HCT116 (cell line): ENCODE measurements at regions of chr16 and their contacts with region 1.

Region 1: GRCh38 chr16:88811769-88812512 is at the start of gene APRT:
- DNase-seq: peak; percentile 91
- ATAC-seq: peak; percentile 64
- H3K4me3 ChIP-seq: peak within 1 kb of the TSS; percentile 72 to 75
- H3K27ac ChIP-seq: peak within 1 kb of the TSS; percentile 100
- H3K4me1 ChIP-seq: peaks cover 22 to 59% of the 10 kb centered on the region in 2 experiments
- H3K27me3 ChIP-seq: no peaks in the 10 kb centered on the region
- CTCF ChIP-seq: peak in 2 of 3 experiments; percentile 35; a peak in 4 of 6 replicates
- POLR2A ChIP-seq: peak; percentile 77
- RAD21 ChIP-seq: no peak
- total RNA-seq, gene APRT: 311 TPM

Region 2: GRCh38 chr16:88102597-88102996 is 709.3 kb before region 1 on chr16:
- CTCF ChIA-PET with region 1: no interaction called
- POLR2A ChIA-PET with region 1: no interaction called
- RAD21 ChIA-PET with region 1: no interaction called
- intact Hi-C with region 1: no loop called
- DNase-seq: no peak
- ATAC-seq: no peak
- H3K4me3 ChIP-seq: no peak overlapping the region
- H3K27ac ChIP-seq: no peak overlapping the region
- H3K4me1 ChIP-seq: peaks cover 0 to 7% of the 10 kb centered on the region in 2 experiments; a peak in 2 of 4 replicates
- H3K27me3 ChIP-seq: no peaks in the 10 kb centered on the region
- CTCF ChIP-seq: no peak
- POLR2A ChIP-seq: no peak
- RAD21 ChIP-seq: no peak

Region 3: GRCh38 chr16:88856828-88857733 is 45.1 kb after region 1 on chr16 and contains the starts of genes GALNS and TRAPPC2L:
- CTCF ChIA-PET with region 1: interaction called, 11 read pairs
- POLR2A ChIA-PET with region 1: no interaction called
- RAD21 ChIA-PET with region 1: interaction called, 3 to 8 read pairs
- intact Hi-C with region 1: loop called (anchors 1 kb)
- DNase-seq: peak; percentile 90
- ATAC-seq: peak; percentile 87
- H3K4me3 ChIP-seq: peak within 1 kb of the TSS; percentile 89 to 100
- H3K27ac ChIP-seq: peak within 1 kb of the TSS; percentile 82
- H3K4me1 ChIP-seq: peaks cover 19 to 26% of the 10 kb centered on the region in 2 experiments
- H3K27me3 ChIP-seq: no peaks in the 10 kb centered on the region
- CTCF ChIP-seq: no peak
- POLR2A ChIP-seq: peak; percentile 89
- RAD21 ChIP-seq: no peak
- total RNA-seq, gene GALNS: 44.6 TPM
- total RNA-seq, gene TRAPPC2L: 94.1 TPM

Region 4: DNA sequence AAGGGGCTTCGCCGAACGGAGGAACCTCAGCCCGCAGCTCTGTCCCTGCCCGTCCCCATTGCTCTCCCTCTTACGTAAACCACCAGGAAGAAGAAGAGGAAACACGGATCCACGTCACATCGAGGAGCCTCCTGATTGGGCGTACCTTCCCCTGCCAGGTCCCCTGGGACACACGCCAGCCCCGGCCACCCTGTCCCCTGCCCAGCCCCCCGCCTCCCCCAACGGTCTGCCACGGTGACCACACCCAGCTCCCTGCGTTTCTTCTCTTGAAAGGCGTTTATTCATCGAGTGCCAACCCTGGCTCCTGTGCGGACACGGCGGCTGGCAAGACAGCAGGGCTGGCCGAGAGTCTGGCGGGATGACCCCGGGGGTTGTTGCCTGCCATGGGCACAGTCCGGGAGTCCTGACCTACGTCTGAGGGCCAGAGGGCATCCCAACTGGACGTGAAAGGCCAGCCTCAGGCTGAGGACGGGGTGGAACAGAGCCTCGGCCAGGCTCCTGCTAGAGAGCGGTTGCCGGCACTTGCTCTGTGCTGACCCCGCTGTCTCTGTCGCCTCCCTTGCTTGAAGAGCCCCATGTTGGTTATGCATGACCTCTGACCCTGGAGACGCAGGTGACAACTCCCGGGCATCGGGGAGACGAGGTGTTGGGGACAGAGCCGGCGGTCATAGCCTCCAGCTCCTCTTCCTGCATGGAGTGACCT is 241.1 kb after region 1 on chr16:
- CTCF ChIA-PET with region 1: no interaction called
- POLR2A ChIA-PET with region 1: no interaction called
- RAD21 ChIA-PET with region 1: no interaction called
- intact Hi-C with region 1: loop called (anchors 10 kb)
- DNase-seq: peak; percentile 92
- ATAC-seq: peak; percentile 86
- H3K4me3 ChIP-seq: peak overlapping the region; percentile 77 to 97
- H3K27ac ChIP-seq: peak overlapping the region; percentile 75
- H3K4me1 ChIP-seq: peaks cover 13 to 28% of the 10 kb centered on the region in 2 experiments
- H3K27me3 ChIP-seq: no peaks in the 10 kb centered on the region
- CTCF ChIP-seq: no peak; a peak in 1 of 6 replicates
- POLR2A ChIP-seq: peak; percentile 80
- RAD21 ChIP-seq: no peak